ENCODE measurements at regions of chr10 and their contacts with region 1.

Region 1: GRCh38 chr10:60883187-60883586 is 60.8 kb downstream of the RHOBTB1 start:
- DNase-seq: peak in 1 of 7 donors; percentile 17
- H3K4me3 ChIP-seq: no peak overlapping the region
- H3K27ac ChIP-seq: no peak overlapping the region
- H3K4me1 ChIP-seq: no peaks in the 10 kb centered on the region
- H3K27me3 ChIP-seq: no peaks in the 10 kb centered on the region
- CTCF ChIP-seq: peak in 5 of 6 experiments; percentile 22 to 47 (median 38)
- POLR2A ChIP-seq: no peak

Region 2: DNA sequence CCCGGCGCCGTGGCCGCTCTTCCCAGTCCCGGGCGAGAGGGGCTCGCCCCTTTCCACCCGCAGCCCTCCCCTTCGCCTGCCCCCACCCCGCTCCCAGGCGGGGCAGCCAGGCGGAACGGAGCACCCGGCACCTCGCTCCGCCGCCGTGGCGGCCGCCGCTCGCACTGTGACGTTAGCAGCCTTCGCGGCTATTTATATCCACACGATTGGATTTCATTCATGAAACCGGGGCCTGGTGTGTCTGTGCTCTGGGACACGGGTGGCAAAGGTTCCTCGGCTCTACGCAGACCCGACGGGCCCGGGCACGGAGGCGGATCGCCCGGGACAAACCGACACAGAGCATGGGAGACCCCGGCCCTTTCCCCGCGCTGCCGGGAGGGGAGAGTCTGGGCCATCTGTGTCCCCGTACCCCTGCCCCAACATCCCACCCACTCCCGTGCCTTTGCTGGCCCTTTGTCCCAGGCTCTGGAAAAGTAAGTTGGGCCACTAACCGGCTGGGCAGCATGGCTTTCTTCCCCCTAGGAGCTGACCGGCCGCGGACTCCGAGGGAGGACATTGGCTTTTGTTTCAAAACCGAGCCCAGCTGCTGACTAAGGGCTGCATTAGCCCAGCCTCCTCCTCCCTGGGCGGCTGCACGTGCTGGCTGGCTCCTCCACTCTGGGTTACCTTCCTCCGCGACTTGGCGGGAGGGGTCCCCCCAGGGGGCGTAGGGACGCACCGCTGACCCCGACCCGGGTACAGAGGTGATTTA is 61.1 kb after region 1 on chr10 and contains the start of gene RHOBTB1:
- intact Hi-C with region 1: loop called in 1 of 2 experiments (anchors 10 kb)
- DNase-seq: peak; percentile 83 to 91 (median 85)
- H3K4me3 ChIP-seq: peak within 1 kb of the TSS; percentile 80 to 94 (median 84)
- H3K27ac ChIP-seq: peak within 1 kb of the TSS; percentile 96 to 100 (median 99)
- H3K4me1 ChIP-seq: peaks cover 0 to 35% of the 10 kb centered on the region in 2 donors
- H3K27me3 ChIP-seq: no peaks in the 10 kb centered on the region
- CTCF ChIP-seq: no peak
- POLR2A ChIP-seq: peak; percentile 60 to 94
- total RNA-seq, gene RHOBTB1: 16.0 to 122 (median 31.7) TPM